Ascending aorta (tissue), 2 donors: ENCODE measurements at regions of chr9 and their contacts with region 1.

Region 1: GRCh38 chr9:76302947-76303940 is 91.0 kb downstream of the RFK start:
- DNase-seq: no peak
- H3K4me3 ChIP-seq: no peak overlapping the region
- H3K27ac ChIP-seq: no peak overlapping the region
- H3K4me1 ChIP-seq: peaks cover 0 to 1% of the 10 kb centered on the region in 2 donors
- H3K27me3 ChIP-seq: no peaks in the 10 kb centered on the region
- CTCF ChIP-seq: peak; percentile 65 to 76 (median 72)

Region 2: DNA sequence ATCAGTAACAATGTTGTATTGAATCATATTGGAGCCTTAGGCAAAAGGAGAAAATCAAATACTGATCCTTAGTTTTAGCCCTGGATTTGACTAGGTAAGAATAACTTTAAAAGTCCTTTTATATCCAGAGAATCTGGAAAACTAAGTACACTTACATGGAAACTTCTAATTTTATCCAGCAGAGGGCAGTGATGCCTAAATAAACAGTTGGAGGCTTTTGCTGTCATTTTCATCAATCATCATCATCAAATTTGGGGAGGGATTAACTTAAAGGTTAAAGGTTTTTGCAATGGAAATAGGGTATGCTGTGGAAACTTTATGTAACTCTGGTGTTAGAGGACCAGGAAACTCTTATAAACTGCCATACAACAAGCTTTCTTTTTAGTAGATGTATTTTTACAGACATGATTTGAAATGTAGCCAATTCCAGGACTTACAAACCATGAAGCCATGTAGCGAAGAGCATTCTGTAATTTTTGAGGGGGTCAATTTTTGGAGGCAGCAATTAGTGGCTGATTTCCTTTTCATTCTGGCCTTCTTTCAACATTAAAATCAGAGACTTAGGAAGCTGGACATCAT is 1102.3 kb before region 1 on chr9:
- intact Hi-C with region 1: loop called (anchors 5 kb)
- DNase-seq: no peak
- H3K4me3 ChIP-seq: no peak overlapping the region
- H3K27ac ChIP-seq: no peak overlapping the region
- H3K4me1 ChIP-seq: peaks cover 0 to 3% of the 10 kb centered on the region in 2 donors
- H3K27me3 ChIP-seq: no peaks in the 10 kb centered on the region
- CTCF ChIP-seq: peak; percentile 49 to 75 (median 64)

Region 3: GRCh38 chr9:75265525-75265972 is 1037.7 kb before region 1 on chr9:
- intact Hi-C with region 1: loop called (anchors 10 kb)
- DNase-seq: peak in 1 of 2 donors; percentile 72
- H3K4me3 ChIP-seq: no peak overlapping the region
- H3K27ac ChIP-seq: no peak overlapping the region
- H3K4me1 ChIP-seq: no peaks in the 10 kb centered on the region
- H3K27me3 ChIP-seq: no peaks in the 10 kb centered on the region
- CTCF ChIP-seq: peak; percentile 60 to 84 (median 77)

Region 4: DNA sequence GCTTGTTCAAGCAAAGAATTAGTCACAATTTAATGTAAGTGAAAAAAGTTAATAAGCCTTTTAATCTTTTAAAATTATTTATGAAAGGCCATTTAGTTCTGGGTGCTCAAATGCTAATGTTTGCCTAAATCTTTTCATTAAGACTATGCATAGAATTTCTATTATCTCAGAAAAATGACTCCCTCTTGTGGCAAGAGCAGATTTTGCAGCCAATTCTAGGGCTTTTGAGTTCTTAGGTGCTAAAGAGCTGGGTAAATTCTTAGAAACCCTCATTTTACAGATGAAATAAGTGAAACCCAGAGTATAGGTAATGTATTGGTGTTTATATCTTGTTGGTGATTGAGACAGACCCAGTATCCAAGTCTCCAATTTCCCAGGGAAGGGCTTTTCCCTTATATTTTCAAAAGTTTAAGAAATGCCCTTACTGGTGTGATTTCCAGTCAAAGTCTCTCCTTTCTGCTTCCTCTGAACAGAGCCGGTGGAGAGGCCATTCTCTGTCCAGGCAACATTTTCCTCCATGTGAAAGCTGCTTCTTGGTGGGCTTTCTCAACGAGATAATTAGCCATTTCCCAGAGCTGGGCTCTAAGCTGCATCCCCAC is 436.9 kb before region 1 on chr9:
- intact Hi-C with region 1: loop called (anchors 5 kb)
- DNase-seq: peak in 1 of 2 donors; percentile 73
- H3K4me3 ChIP-seq: no peak overlapping the region
- H3K27ac ChIP-seq: no peak overlapping the region
- H3K4me1 ChIP-seq: no peaks in the 10 kb centered on the region
- H3K27me3 ChIP-seq: no peaks in the 10 kb centered on the region
- CTCF ChIP-seq: peak; percentile 56 to 82 (median 78)

Region 5: DNA sequence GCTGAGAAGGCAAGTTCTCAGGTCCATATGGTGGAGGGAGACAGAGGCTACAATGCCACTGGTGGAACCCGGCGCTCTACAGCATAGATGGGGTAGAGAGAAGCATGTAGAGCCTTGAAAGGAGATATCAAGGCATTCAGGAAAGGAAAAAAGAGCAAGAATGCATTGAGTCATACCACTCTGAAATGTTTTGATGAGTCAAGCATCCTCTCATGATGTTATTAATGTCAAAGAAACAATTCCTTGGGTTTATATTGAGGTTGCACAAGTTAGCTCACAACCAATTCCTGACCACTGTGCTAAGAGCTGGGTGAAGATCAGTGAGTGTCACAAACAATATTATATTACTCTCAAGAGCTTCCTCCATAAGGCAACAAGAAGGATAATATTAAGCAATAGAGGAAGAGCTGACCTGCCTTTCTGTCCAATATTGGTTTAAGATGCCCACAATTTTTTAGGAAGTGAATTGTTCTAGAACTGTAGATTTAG is 87.0 kb before region 1 on chr9:
- intact Hi-C with region 1: loop called (anchors 5 kb)
- DNase-seq: no peak
- H3K4me3 ChIP-seq: no peak overlapping the region
- H3K27ac ChIP-seq: no peak overlapping the region
- H3K4me1 ChIP-seq: peaks cover 0 to 2% of the 10 kb centered on the region in 2 donors
- H3K27me3 ChIP-seq: no peaks in the 10 kb centered on the region
- CTCF ChIP-seq: no peak